ENCODE measurements at regions of chr18 and their contacts with region 1.

Region 1: GRCh38 chr18:54224379-54225014 is at the start of gene MBD2:
- DNase-seq: peak; percentile 95
- H3K4me3 Mint-ChIP-seq: peak within 1 kb of the TSS; percentile 90
- H3K27ac Mint-ChIP-seq: peak within 1 kb of the TSS; percentile 94
- H3K4me1 Mint-ChIP-seq: peaks cover 34% of the 10 kb centered on the region
- H3K27me3 Mint-ChIP-seq: no peaks in the 10 kb centered on the region
- total RNA-seq, gene MBD2: 102 to 103 TPM

Region 2: DNA sequence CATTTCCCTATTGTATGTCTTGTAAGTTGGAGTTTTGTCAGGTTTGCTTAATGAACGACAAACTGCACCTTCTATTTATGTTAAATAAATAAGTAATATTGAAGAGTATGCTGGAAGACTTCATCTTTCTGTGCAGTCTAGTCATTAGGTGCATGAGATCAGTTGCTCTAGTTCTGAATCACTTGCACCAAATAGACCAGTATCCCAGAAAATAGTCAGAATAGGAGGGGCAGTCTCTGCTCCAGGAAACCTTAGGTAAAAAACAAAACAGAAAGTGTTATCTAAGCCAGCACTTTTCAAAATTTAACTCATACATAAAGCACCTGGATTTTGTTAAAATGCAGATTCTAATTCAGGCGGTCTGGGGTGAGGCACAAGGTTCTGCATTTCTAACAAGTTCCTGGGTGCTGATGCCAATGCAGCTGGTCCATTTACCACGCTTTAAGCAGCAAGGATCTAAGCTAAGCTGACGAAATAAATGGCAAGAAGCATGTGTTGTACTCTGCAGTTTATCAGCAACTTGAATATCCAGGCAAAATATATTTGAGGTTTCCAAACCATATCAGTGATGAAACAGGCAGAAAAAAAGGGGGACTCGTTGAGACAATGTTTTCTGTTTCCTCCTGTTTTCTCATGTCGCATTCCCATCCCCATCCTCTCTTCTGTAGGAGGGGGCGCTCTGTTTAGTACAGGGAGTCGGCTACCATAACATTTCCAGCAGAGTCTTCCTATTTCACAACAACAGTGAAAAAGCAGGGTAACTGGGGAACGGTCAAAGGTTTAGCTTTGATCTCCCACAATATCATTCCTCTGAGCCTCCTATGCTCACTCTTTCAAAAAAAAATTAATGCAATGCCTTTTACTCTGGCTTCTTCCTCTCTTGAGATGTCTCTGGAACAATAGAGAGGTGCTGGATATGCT is 106.4 kb before region 1 on chr18:
- CTCF ChIA-PET with region 1: no interaction called
- intact Hi-C with region 1: no loop called
- DNase-seq: no peak
- H3K4me3 Mint-ChIP-seq: no peak overlapping the region
- H3K27ac Mint-ChIP-seq: no peak overlapping the region
- H3K4me1 Mint-ChIP-seq: peaks cover 2% of the 10 kb centered on the region
- H3K27me3 Mint-ChIP-seq: no peaks in the 10 kb centered on the region

Region 3: GRCh38 chr18:54163453-54163852 is 61.0 kb before region 1 on chr18:
- CTCF ChIA-PET with region 1: no interaction called
- intact Hi-C with region 1: loop called (anchors 1 kb)
- DNase-seq: no peak
- H3K4me3 Mint-ChIP-seq: no peak overlapping the region
- H3K27ac Mint-ChIP-seq: peak overlapping the region; percentile 87
- H3K4me1 Mint-ChIP-seq: peaks cover 21% of the 10 kb centered on the region
- H3K27me3 Mint-ChIP-seq: no peaks in the 10 kb centered on the region

Region 4: DNA sequence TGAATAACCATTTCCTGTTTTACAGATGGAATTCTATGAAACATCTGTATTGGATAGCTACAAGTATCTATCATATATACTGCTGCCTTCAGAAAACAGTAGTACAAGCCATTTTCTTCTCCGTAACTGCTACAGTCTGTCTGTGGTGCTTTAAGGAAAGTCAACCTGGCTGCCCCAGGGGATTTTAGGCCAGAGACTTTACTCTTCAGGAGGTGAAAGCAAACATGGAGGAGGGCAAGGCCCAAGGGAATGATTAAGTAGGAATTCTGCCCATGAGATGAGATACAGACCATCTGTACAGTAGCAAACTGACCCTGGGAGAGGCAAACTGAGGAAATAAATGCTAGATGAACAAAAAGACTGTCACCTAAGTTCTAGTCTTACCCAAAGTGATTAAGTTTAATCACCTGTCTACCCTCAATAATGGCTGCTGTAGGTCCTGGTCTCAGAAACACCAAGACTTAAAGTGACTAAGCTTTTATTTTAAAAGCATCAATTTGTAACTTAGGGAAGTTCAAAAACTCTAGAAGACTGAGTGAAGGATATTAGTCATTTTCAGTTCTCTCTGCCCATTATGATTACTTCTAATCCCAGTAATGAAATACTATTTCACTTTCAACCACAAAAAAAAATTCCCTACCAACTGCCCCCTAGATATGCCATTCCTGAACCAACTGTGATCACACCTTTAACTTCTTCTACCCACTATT is 14.9 kb before region 1 on chr18:
- CTCF ChIA-PET with region 1: interaction called, 12 read pairs
- intact Hi-C with region 1: loop called (anchors 1 kb)
- DNase-seq: no peak
- H3K4me3 Mint-ChIP-seq: peak overlapping the region; percentile 50
- H3K27ac Mint-ChIP-seq: peak overlapping the region; percentile 88
- H3K4me1 Mint-ChIP-seq: peaks cover 54% of the 10 kb centered on the region
- H3K27me3 Mint-ChIP-seq: no peaks in the 10 kb centered on the region

Region 5: GRCh38 chr18:54261894-54262293 is 37.4 kb after region 1 on chr18:
- CTCF ChIA-PET with region 1: interaction called, 7 read pairs
- intact Hi-C with region 1: loop called (anchors 1 kb)
- DNase-seq: peak; percentile 79
- H3K4me3 Mint-ChIP-seq: no peak overlapping the region
- H3K27ac Mint-ChIP-seq: peak overlapping the region; percentile 77
- H3K4me1 Mint-ChIP-seq: peaks cover 42% of the 10 kb centered on the region
- H3K27me3 Mint-ChIP-seq: no peaks in the 10 kb centered on the region

Region 6: DNA sequence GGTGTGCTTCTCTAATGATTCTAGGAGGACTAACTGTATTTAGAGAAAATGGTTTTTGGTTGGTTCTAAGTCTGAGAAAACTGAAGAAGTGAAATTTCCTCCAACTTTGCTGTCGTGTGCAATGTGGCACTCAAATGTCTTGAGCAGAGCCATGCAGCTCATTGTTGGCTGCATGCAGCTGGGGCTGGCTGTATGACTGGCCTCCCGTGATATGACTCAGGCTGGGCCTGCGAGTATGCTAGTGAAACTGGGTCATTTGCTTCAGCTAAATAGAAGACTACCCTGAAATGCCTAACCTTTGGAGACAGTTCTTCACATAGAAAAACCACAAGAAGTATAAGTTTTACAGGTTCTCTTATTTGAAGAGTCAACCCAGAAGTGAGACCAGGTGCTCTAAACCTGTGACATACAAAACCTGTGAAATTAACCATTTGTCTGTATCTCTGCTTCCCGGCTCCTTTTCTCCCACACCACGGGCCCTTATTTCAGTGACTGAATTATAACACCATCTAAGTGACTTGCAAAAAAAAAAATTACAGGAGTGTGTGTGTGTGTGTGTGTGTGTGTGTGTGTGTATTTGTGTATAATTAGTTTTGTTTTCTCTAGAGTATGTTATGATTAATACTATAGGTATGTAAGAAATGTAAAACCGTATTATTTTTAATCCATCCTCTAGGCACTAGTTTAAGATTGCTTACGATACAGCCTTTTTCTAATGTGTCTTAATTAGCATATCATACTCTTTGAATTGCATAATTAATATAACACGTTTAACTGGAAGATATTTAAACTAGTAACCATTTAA is 60.7 kb after region 1 on chr18:
- CTCF ChIA-PET with region 1: interaction called, 6 read pairs
- intact Hi-C with region 1: loop called (anchors 1 kb)
- DNase-seq: peak; percentile 86
- H3K4me3 Mint-ChIP-seq: no peak overlapping the region
- H3K27ac Mint-ChIP-seq: peak overlapping the region; percentile 17
- H3K4me1 Mint-ChIP-seq: peaks cover 18% of the 10 kb centered on the region
- H3K27me3 Mint-ChIP-seq: no peaks in the 10 kb centered on the region

Region 7: GRCh38 chr18:54357660-54358494 is 133.4 kb after region 1 on chr18 and contains the starts of genes C18orf54 and STARD6:
- CTCF ChIA-PET with region 1: interaction called, 9 read pairs
- intact Hi-C with region 1: loop called (anchors 1 kb)
- DNase-seq: peak; percentile 89
- H3K4me3 Mint-ChIP-seq: peak within 1 kb of the TSS; percentile 100
- H3K27ac Mint-ChIP-seq: peak within 1 kb of the TSS; percentile 95
- H3K4me1 Mint-ChIP-seq: peaks cover 12% of the 10 kb centered on the region
- H3K27me3 Mint-ChIP-seq: peaks cover 5% of the 10 kb centered on the region
- total RNA-seq, gene C18orf54: 10.2 to 11.5 TPM
- total RNA-seq, gene STARD6: not detected

Region 8: DNA sequence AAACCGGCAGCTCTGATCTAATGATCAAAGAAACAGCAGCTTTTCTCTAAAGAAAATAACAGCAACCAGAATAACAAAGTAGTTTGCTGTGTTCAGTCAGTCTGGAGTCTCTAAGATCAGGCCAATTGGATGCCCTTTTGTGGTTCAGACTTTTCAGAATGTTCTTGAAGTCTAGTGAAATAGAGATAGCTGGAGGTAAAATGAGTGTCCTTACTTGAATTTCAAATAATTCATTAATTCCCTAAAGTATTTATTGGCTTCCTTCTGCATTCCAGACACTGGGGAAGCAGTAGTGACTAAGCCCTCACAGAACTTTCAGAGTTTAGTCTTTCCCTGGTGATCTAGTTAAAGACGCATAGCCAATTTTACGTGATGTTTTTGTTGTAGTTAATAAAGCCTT is 191.9 kb after region 1 on chr18:
- CTCF ChIA-PET with region 1: no interaction called
- intact Hi-C with region 1: no loop called
- DNase-seq: no peak
- H3K4me3 Mint-ChIP-seq: no peak overlapping the region
- H3K27ac Mint-ChIP-seq: no peak overlapping the region
- H3K4me1 Mint-ChIP-seq: no peaks in the 10 kb centered on the region
- H3K27me3 Mint-ChIP-seq: peaks cover 13% of the 10 kb centered on the region

Region 9: GRCh38 chr18:54712306-54712705 is 487.8 kb after region 1 on chr18:
- CTCF ChIA-PET with region 1: no interaction called
- intact Hi-C with region 1: loop called (anchors 5 kb)
- DNase-seq: peak; percentile 38
- H3K4me3 Mint-ChIP-seq: no peak overlapping the region
- H3K27ac Mint-ChIP-seq: no peak overlapping the region
- H3K4me1 Mint-ChIP-seq: peaks cover 26% of the 10 kb centered on the region
- H3K27me3 Mint-ChIP-seq: peaks cover 7% of the 10 kb centered on the region